ENCODE measurements at regions of chr4 and their contacts with region 1.

Region 1: GRCh38 chr4:88110826-88111225 is 47.6 kb downstream of the ABCG2 start:
- DNase-seq: no peak
- ATAC-seq: no peak

Region 2: DNA sequence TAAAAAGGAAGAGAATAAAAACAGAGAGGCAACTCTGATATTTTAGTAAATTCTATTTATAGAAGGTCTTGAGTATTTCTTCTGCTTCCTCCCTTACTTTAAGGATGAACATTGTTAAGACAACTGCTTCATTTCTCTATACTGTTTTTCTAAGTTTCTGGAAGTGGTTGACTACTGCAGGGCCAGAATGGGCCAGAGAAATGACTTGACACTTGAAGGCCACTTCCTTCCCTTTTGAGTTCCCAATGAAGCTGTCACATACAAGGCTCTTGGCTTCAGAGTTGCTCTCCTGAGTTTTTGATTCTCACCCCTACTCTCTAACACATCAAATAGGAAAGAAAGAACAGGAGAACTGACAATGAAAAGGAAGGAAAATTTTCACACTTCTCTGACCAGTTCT is 65.8 kb before region 1 on chr4:
- intact Hi-C with region 1: loop called (anchors 5 kb)
- DNase-seq: no peak
- ATAC-seq: no peak

Measured in sciatic nerve (tissue), 2 donors.